ENCODE measurements at regions of chr1 and their contacts with region 1.

Region 1: GRCh38 chr1:26811057-26811456 is 15.4 kb upstream of the ZDHHC18 start:
- DNase-seq: no peak
- H3K4me3 Mint-ChIP-seq: no peak overlapping the region
- H3K27ac Mint-ChIP-seq: no peak overlapping the region
- H3K4me1 Mint-ChIP-seq: peaks cover 26% of the 10 kb centered on the region
- H3K27me3 Mint-ChIP-seq: no peaks in the 10 kb centered on the region

Region 2: GRCh38 chr1:26799479-26800142 is 11.4 kb before region 1 on chr1:
- CTCF ChIA-PET with region 1: interaction called, 42 read pairs
- DNase-seq: peak; percentile 31
- H3K4me3 Mint-ChIP-seq: peak overlapping the region; percentile 46
- H3K27ac Mint-ChIP-seq: peak overlapping the region; percentile 94
- H3K4me1 Mint-ChIP-seq: peaks cover 58% of the 10 kb centered on the region
- H3K27me3 Mint-ChIP-seq: no peaks in the 10 kb centered on the region

Measured in activated naive CD4-positive, alpha-beta T cell treated with anti-CD3 and anti-CD28 coated beads, Interleukin-2, amount 10 ng/mL, durations not matched to agents 7 days and 5 days (primary cell).